Activated CD8-positive, alpha-beta memory T cell treated with anti-CD3 and anti-CD28 coated beads, Interleukin-2, amount 10 ng/mL, durations not matched to agents 7 days and 5 days (primary cell): ENCODE measurements at regions of chr15 and their contacts with region 1.

Region 1: GRCh38 chr15:85485956-85486567 is 105.7 kb downstream of the AKAP13 start:
- DNase-seq: peak; percentile 68
- ATAC-seq: peak; percentile 85
- H3K4me3 Mint-ChIP-seq: no peak overlapping the region
- H3K27ac Mint-ChIP-seq: no peak overlapping the region
- H3K4me1 Mint-ChIP-seq: peaks cover 59% of the 10 kb centered on the region
- H3K27me3 Mint-ChIP-seq: no peaks in the 10 kb centered on the region

Region 2: GRCh38 chr15:85475317-85475701 is 10.8 kb before region 1 on chr15:
- CTCF ChIA-PET with region 1: interaction called, 12 read pairs
- DNase-seq: no peak
- ATAC-seq: peak; percentile 33
- H3K4me3 Mint-ChIP-seq: no peak overlapping the region
- H3K27ac Mint-ChIP-seq: no peak overlapping the region
- H3K4me1 Mint-ChIP-seq: peaks cover 49% of the 10 kb centered on the region
- H3K27me3 Mint-ChIP-seq: no peaks in the 10 kb centered on the region

Region 3: GRCh38 chr15:85504749-85505676 is 19.0 kb after region 1 on chr15:
- CTCF ChIA-PET with region 1: interaction called, 36 read pairs
- DNase-seq: peak; percentile 53
- ATAC-seq: no peak
- H3K4me3 Mint-ChIP-seq: no peak overlapping the region
- H3K27ac Mint-ChIP-seq: no peak overlapping the region
- H3K4me1 Mint-ChIP-seq: peaks cover 32% of the 10 kb centered on the region
- H3K27me3 Mint-ChIP-seq: no peaks in the 10 kb centered on the region